ENCODE measurements at regions of chr12 and their contacts with region 1.

Region 1: DNA sequence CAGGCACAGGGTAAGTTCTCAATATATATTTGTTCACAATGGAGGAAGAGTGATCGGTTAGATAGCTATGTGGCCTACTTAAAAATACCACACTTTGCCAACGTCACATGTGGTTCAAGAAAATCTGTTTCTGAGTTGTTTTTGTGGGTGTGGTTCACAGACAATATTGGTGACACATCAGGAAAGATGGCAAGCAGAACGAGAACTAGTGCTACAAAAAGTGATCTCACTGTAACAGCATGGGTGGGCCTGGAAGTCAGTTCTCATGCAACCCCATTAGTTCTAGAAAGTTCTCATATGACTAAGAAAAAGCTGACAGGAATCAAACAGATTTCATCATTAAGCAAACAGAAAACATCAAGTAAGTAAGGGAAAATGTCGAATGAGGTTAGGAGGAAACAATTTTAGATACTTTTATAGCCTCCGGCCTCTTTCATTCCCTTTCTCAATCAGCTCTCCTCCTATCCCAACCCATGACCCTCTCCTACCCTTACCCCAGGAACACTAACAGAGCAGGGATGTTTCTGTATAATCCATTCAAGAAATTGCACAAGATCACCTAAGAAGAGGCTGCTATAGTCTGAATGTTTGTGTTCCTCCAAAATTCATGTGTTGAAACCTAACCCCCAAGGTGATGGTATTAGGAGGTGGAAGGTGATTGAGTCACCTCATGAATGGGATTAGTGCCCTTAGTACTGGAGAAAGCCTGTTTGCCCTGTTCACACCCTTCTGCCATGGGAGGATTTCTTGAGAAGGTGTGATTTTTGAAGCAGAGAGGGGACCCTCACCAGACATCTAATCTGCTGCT is 15.5 kb upstream of the NTN4 start:
- DNase-seq: peak; percentile 65
- H3K4me3 Mint-ChIP-seq: peak overlapping the region; percentile 44
- H3K27ac Mint-ChIP-seq: peak overlapping the region; percentile 100
- H3K4me1 Mint-ChIP-seq: peaks cover 61% of the 10 kb centered on the region
- H3K27me3 Mint-ChIP-seq: no peaks in the 10 kb centered on the region
- CTCF ChIP-seq: no peak

Region 2: GRCh38 chr12:95623585-95624042 is 182.5 kb before region 1 on chr12:
- CTCF ChIA-PET with region 1: no interaction called
- intact Hi-C with region 1: loop called (anchors 2 kb)
- DNase-seq: peak; percentile 78
- H3K4me3 Mint-ChIP-seq: no peak overlapping the region
- H3K27ac Mint-ChIP-seq: peak overlapping the region; percentile 96
- H3K4me1 Mint-ChIP-seq: peaks cover 40% of the 10 kb centered on the region
- H3K27me3 Mint-ChIP-seq: no peaks in the 10 kb centered on the region
- CTCF ChIP-seq: peak; percentile 50

Region 3: DNA sequence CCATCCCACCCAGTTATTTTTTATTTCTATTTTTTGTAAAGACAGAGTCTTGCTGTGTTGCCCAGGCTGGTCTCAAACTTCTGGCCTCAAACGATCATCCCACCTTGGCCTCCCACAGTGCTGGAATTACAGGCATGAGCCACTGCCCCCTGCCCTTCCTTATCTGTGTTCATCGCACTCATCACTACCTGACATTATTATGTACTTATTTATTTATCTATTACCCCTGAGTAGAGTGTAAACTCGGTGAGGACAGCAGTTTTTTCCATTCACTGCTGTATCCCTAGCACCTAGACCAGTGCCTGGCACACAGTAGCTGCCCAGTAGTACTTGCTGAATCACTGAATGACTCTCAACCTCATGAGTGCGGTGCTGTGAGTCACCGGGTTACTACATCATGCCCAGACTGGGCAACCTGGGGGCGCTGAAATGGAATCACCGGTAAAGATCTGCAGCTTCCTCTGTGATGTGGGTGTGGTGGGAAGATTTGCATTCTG is 173.0 kb before region 1 on chr12:
- CTCF ChIA-PET with region 1: interaction called, 10 read pairs
- intact Hi-C with region 1: no loop called
- DNase-seq: peak; percentile 90
- H3K4me3 Mint-ChIP-seq: peak overlapping the region; percentile 42
- H3K27ac Mint-ChIP-seq: peak overlapping the region; percentile 98
- H3K4me1 Mint-ChIP-seq: peaks cover 59% of the 10 kb centered on the region
- H3K27me3 Mint-ChIP-seq: no peaks in the 10 kb centered on the region
- CTCF ChIP-seq: no peak

Region 4: DNA sequence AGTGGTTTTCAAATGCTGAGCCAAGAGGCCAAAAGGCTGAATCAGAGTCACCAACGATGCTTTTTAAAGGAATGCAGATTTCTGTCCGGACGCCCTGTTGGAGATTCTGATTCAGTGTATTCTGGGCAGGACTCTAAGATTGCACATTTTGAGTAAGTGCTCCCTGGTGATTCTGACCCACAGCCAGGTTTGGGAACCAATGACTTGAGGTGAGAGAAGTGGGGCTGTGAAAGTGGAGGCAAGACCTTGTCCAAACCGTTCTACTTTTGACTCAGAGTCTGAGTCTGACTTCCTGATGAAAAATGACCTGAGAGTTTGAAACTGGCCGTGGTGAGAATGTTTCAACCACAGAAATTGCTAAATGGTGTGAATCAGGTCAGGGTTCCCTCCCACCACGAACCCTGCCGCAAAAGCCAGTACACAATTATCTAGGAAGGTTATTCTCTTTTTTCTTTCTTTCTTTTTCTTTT is 105.7 kb before region 1 on chr12:
- CTCF ChIA-PET with region 1: no interaction called
- intact Hi-C with region 1: loop called (anchors 5 kb)
- DNase-seq: no peak
- H3K4me3 Mint-ChIP-seq: no peak overlapping the region
- H3K27ac Mint-ChIP-seq: peak overlapping the region; percentile 77
- H3K4me1 Mint-ChIP-seq: peaks cover 27% of the 10 kb centered on the region
- H3K27me3 Mint-ChIP-seq: no peaks in the 10 kb centered on the region
- CTCF ChIP-seq: no peak

Region 5: DNA sequence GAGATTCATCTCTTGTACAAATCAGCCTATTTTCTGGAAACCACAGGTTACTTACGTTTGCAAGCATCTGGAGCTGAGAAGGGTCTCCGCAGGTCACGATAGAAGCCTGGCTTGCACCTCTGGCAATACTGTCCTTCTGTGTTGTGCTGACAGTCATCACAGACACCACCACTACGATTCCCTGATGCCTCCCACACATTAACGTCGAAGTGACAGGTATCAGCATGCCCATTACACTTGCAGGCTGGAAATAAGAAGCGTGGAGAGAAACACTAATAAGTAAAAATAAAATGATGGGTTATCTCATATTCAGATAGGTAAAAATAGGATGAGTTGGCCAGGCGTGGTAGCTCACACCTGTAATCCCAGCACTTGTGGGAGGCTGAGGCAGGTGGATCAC is 95.7 kb before region 1 on chr12:
- CTCF ChIA-PET with region 1: interaction called, 16 read pairs
- intact Hi-C with region 1: no loop called
- DNase-seq: no peak
- H3K4me3 Mint-ChIP-seq: no peak overlapping the region
- H3K27ac Mint-ChIP-seq: no peak overlapping the region
- H3K4me1 Mint-ChIP-seq: peaks cover 8% of the 10 kb centered on the region
- H3K27me3 Mint-ChIP-seq: no peaks in the 10 kb centered on the region
- CTCF ChIP-seq: no peak